Vagina (tissue), 2 donors: ENCODE measurements at regions of chr11 and their contacts with region 1.

Region 1: GRCh38 chr11:66328307-66329144 is 7.7 kb downstream of the RIN1 start:
- DNase-seq: no peak
- H3K4me3 ChIP-seq: no peak overlapping the region
- H3K27ac ChIP-seq: peak overlapping the region; percentile 93
- H3K4me1 ChIP-seq: peaks cover 44% of the 10 kb centered on the region
- H3K27me3 ChIP-seq: no peaks in the 10 kb centered on the region
- CTCF ChIP-seq: peak; percentile 86 to 99 (median 98)
- POLR2A ChIP-seq: no peak

Region 2: GRCh38 chr11:66288671-66289547 is 39.6 kb before region 1 on chr11 and contains the start of gene YIF1A:
- intact Hi-C with region 1: no loop called
- DNase-seq: peak; percentile 100
- H3K4me3 ChIP-seq: peak within 1 kb of the TSS; percentile 92 to 98
- H3K27ac ChIP-seq: peak within 1 kb of the TSS; percentile 90
- H3K4me1 ChIP-seq: peaks cover 42% of the 10 kb centered on the region
- H3K27me3 ChIP-seq: peaks cover 5% of the 10 kb centered on the region
- CTCF ChIP-seq: peak in 1 of 3 experiments; percentile 14
- POLR2A ChIP-seq: peak in 1 of 2 donors; percentile 93
- total RNA-seq, gene YIF1A: 130 TPM

Region 3: GRCh38 chr11:66311965-66312548 is 16.5 kb before region 1 on chr11:
- intact Hi-C with region 1: loop called (anchors 2 kb)
- DNase-seq: no peak
- H3K4me3 ChIP-seq: peak overlapping the region; percentile 58 to 68
- H3K27ac ChIP-seq: peak overlapping the region; percentile 85
- H3K4me1 ChIP-seq: peaks cover 40% of the 10 kb centered on the region
- H3K27me3 ChIP-seq: no peaks in the 10 kb centered on the region
- CTCF ChIP-seq: peak; percentile 87 to 97 (median 89)
- POLR2A ChIP-seq: no peak

Region 4: DNA sequence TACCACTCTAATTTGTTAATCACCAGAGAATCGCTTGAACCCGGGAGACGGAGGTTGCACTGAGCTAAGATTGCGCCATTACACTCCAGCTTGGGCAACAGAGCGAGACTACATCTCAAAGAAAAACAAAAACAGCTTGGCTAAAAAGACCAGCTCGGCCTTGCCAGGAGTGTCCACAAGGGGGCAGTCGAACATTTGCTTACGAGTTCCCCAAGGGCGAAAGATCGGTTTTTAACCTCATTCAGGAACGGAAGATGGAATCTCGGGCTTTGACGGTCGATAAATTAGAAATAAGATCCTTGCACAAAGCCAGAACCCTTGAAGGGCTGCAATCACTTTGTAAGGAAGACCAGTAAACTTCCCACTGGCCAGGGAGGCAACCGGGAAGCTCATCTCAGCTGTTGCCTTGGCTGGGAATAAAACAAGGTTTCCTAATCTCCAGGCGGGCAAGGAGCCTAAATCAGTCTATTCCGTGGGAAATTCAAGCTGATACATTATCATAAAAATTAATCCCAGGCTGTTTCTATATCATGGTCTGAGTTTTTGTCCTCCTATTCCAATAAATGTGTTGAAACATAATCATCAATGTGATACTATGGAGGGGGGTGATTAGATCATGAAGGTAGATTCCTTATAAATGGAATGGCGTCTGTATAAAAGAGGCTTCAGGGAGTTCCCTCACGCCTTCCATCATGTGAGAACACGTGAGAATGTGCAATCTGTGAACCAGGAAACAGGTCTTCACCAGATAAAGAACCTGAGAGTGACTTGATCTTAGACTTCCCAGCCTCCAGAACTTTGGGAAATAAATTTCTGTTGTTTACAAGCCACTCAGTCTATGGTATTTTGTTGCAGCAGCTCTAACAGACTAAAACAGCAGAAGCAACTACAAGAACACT is 57.9 kb after region 1 on chr11:
- intact Hi-C with region 1: loop called (anchors 5 kb)
- DNase-seq: peak in 1 of 2 donors; percentile 83
- H3K4me3 ChIP-seq: peak overlapping the region; percentile 16 to 19
- H3K27ac ChIP-seq: peak overlapping the region; percentile 20
- H3K4me1 ChIP-seq: no peaks in the 10 kb centered on the region
- H3K27me3 ChIP-seq: no peaks in the 10 kb centered on the region
- CTCF ChIP-seq: peak; percentile 81 to 88 (median 85)
- POLR2A ChIP-seq: no peak

Region 5: DNA sequence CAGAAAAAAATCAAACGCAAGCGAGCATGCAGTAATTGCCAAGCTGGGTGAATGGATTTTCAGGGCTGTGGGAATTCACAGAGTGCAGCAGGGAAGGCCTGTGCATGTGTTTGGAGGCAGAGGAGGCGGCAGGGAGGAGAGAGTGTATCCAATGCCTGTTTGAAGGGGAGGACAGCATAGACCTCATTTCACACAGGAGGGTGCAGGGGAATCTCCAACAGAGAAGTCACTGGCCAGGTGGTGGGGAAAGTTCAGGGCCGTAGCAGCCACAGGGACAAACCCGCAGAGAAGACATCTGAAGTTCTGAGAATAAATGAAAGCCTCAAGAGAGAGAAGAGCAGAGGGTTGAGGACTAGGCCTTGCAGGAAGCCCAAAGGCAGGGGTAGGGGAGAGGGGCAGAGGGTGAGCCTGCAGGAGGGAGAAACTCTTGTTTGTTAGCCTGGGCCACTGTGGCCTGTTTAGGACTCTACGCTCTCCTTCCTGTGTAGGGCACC is 771.4 kb after region 1 on chr11:
- intact Hi-C with region 1: no loop called
- DNase-seq: no peak
- H3K4me3 ChIP-seq: no peak overlapping the region
- H3K27ac ChIP-seq: no peak overlapping the region
- H3K4me1 ChIP-seq: no peaks in the 10 kb centered on the region
- H3K27me3 ChIP-seq: no peaks in the 10 kb centered on the region
- CTCF ChIP-seq: no peak
- POLR2A ChIP-seq: no peak